GM12878 (cell line): ENCODE measurements at regions of chr4 and their contacts with region 1.

Region 1: DNA sequence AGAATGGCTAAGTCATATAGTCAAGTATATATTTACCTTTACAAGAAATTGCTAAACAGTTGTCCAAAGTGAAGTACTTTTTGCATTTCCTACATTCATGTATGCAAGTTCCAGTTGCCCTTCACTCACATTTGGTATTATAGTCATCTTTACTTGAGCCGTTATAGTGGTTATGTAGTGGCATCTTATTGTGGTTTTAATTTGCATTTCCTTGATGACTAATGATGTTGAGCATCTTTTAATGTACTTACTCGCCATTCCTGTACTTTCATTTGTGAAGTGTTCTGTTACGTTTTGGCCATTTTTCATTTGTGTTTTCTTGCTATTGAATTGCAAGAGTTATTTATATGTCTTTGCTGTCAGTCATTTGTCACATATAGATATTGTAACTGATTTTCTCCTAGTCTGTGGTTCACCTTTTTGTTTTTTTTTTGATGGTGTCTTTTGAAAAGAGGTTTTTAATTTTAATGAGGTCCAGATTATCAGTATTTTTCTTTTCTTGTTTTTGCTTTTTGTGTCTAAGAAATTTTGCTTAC is 27.6 kb downstream of the ARFIP1 start:
- DNase-seq: peak; percentile 9
- ATAC-seq: peak; percentile 86
- H3K4me3 ChIP-seq: no peak overlapping the region
- H3K27ac ChIP-seq: no peak overlapping the region
- H3K4me1 ChIP-seq: no peaks in the 10 kb centered on the region
- H3K27me3 ChIP-seq: no peaks in the 10 kb centered on the region
- CTCF ChIP-seq: no peak
- EP300 ChIP-seq: no peak
- POLR2A ChIP-seq: no peak
- RAD21 ChIP-seq: no peak

Region 2: DNA sequence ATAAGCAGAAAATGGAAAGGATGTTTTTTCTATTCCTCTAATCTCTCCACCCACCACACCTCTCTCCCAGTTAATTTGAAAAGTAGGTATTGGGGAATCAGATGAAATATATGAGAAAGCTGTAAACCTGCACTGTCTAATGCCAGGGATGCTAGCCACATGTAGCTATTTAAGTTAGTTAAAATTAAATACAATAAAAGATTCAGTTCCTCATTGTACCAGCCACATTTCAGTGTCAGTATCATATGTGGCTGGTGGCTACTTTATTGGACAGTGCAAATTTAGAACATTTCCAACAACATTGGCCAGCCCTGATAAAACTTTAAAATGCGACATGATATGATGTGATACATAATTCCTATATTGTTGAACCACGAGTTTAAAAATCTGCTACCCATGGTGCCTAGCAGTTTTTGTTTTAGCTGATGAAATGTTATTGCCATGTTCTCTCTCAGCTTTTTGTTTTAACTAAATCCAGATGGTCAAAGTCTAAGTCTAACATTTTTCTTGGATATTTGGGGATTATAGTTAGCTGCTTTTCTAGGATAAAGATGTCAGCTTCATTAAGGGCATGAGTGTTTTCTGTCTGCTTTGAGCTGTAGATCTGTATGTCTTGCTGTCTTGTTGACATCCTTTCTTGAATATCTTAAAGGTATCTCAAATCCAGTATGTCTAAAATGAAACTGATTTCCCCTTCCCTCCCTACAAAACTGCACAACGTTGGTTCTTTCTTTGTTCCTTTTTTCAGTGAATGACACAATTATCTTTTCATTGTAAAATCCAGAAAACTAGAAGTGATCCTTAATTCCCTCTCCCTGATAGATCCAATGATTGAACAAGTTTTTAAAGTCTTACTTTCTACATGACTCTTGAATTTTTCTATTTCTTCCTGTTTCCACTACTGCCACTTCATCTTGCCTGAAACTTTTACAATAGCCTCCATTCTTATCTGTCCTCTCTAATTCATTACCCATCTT is 21.4 kb before region 1 on chr4:
- CTCF ChIA-PET with region 1: interaction called, 4 read pairs
- POLR2A ChIA-PET with region 1: no interaction called
- RAD21 ChIA-PET with region 1: no interaction called
- SMC1A ChIA-PET with region 1: interaction called, 11 read pairs
- in situ Hi-C with region 1: no loop called
- intact Hi-C with region 1: no loop called
- DNase-seq: no peak
- ATAC-seq: peak; percentile 75
- H3K4me3 ChIP-seq: peak overlapping the region; percentile 11; the same call in 1 of the 2 replicates
- H3K27ac ChIP-seq: no peak overlapping the region; the same call in 1 of the 2 replicates
- H3K4me1 ChIP-seq: peaks cover 6% of the 10 kb centered on the region; the same call in 1 of the 2 replicates
- H3K27me3 ChIP-seq: no peaks in the 10 kb centered on the region
- CTCF ChIP-seq: no peak
- EP300 ChIP-seq: no peak
- POLR2A ChIP-seq: no peak
- RAD21 ChIP-seq: no peak